Naive thymus-derived CD4-positive, alpha-beta T cell (primary cell): ENCODE measurements at regions of chr5 and their contacts with region 1.

Region 1: DNA sequence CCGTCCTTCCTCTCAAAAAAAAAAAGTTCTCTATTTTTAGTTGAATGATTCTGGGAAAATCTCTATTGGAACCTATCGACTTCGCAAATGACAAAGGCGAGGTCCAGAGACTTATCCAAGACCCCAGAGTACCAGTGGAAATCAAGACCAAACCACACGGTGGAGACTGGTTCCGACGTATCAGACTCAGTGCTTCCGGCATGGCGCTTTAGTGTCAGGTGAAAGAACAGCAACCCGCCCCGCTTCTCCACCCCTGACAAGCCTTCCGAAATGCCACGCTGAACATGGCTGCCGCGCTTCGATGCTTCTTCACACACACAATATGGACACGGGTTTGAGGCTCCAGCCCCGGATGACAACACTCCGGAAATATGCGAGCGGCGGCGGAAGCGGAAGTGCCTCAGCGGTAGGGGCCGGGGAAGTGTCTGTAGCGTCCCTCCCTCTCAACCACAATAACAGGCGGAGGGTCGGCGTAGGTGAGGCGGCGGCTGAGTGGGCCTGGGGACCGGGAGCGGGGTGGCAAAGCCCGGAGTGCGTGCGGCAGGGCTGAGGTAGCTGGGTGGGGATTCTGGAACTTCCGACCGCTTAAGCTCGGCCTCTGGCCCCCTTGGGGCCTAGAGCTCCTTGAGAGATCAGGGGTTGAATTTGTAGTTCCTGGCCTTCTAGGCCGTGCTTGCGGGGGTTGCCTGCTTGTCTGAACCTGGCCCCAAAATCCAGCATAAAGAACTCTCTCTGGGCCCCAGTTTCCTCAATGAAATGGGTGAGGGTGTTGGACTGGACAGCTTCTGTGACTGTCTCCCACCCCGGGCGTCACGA is at the start of gene FBXO38:
- DNase-seq: peak; percentile 88 to 99 (median 98)
- ATAC-seq: peak; percentile 97
- H3K4me3 ChIP-seq: peak within 1 kb of the TSS; percentile 66
- H3K4me3 Mint-ChIP-seq: peak within 1 kb of the TSS; percentile 84 to 97 (median 88)
- H3K27ac ChIP-seq: peak within 1 kb of the TSS; percentile 91
- H3K27ac Mint-ChIP-seq: peak within 1 kb of the TSS; percentile 93 to 99 (median 98)
- H3K4me1 ChIP-seq: peaks cover 18 to 41% of the 10 kb centered on the region in 2 donors
- H3K4me1 Mint-ChIP-seq: peaks cover 43 to 78% (median 71%) of the 10 kb centered on the region in 7 donors
- H3K27me3 ChIP-seq: no peaks in the 10 kb centered on the region
- H3K27me3 Mint-ChIP-seq: no peaks in the 10 kb centered on the region
- total RNA-seq, gene FBXO38: 59.2 to 80.0 (median 65.6) TPM

Region 2: DNA sequence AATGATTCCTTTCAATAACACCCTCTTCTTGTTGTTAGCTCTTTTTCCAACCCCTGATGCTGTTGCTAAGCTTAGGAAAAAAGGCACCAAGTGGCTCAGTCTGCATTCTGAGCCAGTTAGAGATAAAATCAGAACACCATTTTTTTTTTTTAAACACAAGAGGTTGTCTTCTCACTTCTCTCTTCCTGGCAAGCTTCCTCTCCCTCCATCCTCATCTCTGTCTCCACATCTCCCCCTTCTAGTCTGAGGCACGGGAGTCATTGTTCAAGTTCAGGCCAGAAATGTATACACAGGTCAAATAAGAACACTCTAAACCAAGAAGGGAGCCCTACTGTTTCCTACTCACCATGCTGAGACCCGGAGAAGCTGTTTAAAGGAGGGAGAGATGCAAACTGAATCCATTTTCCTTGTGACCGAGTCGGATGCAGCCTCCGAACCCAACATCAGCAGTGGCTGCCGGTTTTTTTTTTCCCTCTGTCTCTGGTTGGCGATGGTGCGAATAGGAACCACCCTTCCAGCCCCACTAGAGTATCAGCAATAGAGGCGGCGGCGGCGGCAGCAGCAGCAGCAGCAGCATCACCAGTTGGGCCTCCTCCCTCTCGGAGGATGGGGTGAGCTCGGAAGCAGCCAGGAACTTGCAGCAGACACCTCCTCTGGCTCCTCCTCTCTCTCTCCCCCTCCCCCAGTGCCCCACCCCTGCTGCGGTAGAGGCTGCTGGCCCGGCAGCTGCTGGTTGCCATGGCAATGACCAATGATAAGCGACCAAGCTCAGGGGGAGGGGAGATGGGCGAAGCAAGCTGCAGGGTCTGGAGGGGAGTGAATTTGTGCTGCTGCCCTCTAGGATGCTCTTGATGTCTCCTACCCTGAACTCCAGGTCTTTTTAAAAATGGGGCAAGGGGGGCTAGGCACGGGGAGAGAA is 601.4 kb before region 1 on chr5 and contains the start of gene JAKMIP2:
- CTCF ChIA-PET with region 1: no interaction called
- POLR2A ChIA-PET with region 1: no interaction called
- intact Hi-C with region 1: loop called in 1 of 2 experiments (anchors 1 kb)
- DNase-seq: peak; percentile 10 to 91 (median 72)
- ATAC-seq: peak; percentile 95
- H3K4me3 ChIP-seq: peak within 1 kb of the TSS; percentile 57
- H3K4me3 Mint-ChIP-seq: peak within 1 kb of the TSS; percentile 27 to 93 (median 83)
- H3K27ac ChIP-seq: peak within 1 kb of the TSS; percentile 19
- H3K27ac Mint-ChIP-seq: peak within 1 kb of the TSS in 8 of 9 donors; percentile 3 to 94 (median 87)
- H3K4me1 ChIP-seq: peaks cover 0 to 15% of the 10 kb centered on the region in 2 donors
- H3K4me1 Mint-ChIP-seq: peaks cover 6 to 27% (median 16%) of the 10 kb centered on the region in 7 donors
- H3K27me3 ChIP-seq: no peaks in the 10 kb centered on the region
- H3K27me3 Mint-ChIP-seq: peaks cover 0 to 22% (median 4%) of the 10 kb centered on the region in 5 donors
- total RNA-seq, gene JAKMIP2: 0.16 to 4.5 (median 0.88) TPM

Region 3: DNA sequence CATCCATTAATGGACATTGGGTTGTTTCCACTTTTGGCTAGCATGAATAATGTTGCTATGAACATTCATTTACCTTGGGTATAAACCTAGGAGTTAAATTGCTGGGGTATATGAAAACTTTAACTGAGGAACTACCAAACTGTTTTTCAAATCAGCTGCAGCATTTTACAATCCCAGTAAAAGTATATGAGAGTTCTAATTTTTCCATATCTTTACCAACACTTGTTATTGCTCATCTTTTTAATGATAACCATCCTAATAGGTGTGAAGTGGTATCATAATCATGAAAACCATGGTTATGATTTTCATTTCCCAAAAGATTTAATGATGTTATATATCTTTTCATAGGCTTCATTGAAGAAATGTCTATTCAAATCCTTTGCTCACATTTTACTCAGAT is 15.5 kb before region 1 on chr5:
- CTCF ChIA-PET with region 1: no interaction called
- POLR2A ChIA-PET with region 1: no interaction called
- intact Hi-C with region 1: no loop called
- DNase-seq: no peak
- ATAC-seq: no peak
- H3K4me3 ChIP-seq: no peak overlapping the region
- H3K4me3 Mint-ChIP-seq: no peak overlapping the region
- H3K27ac ChIP-seq: no peak overlapping the region
- H3K27ac Mint-ChIP-seq: no peak overlapping the region
- H3K4me1 ChIP-seq: no peaks in the 10 kb centered on the region
- H3K4me1 Mint-ChIP-seq: no peaks in the 10 kb centered on the region
- H3K27me3 ChIP-seq: no peaks in the 10 kb centered on the region
- H3K27me3 Mint-ChIP-seq: peaks cover 0 to 8% (median 0%) of the 10 kb centered on the region in 5 donors

Region 4: GRCh38 chr5:148620696-148621095 is 236.9 kb after region 1 on chr5:
- CTCF ChIA-PET with region 1: no interaction called
- POLR2A ChIA-PET with region 1: no interaction called
- intact Hi-C with region 1: loop called in 1 of 2 experiments (anchors 10 kb)
- DNase-seq: peak in 8 of 9 donors; percentile 3 to 39 (median 15)
- ATAC-seq: peak; percentile 93
- H3K4me3 ChIP-seq: no peak overlapping the region
- H3K4me3 Mint-ChIP-seq: peak overlapping the region in 7 of 10 donors; percentile 3 to 56 (median 34)
- H3K27ac ChIP-seq: no peak overlapping the region
- H3K27ac Mint-ChIP-seq: peak overlapping the region in 4 of 9 donors; percentile 17 to 33 (median 20)
- H3K4me1 ChIP-seq: peaks cover 5 to 18% of the 10 kb centered on the region in 2 donors
- H3K4me1 Mint-ChIP-seq: peaks cover 16 to 33% (median 25%) of the 10 kb centered on the region in 7 donors
- H3K27me3 ChIP-seq: no peaks in the 10 kb centered on the region
- H3K27me3 Mint-ChIP-seq: peaks cover 8 to 43% (median 12%) of the 10 kb centered on the region in 5 donors

Region 5: GRCh38 chr5:148826053-148826738 is 442.4 kb after region 1 on chr5 and contains the start of gene ADRB2:
- CTCF ChIA-PET with region 1: no interaction called
- POLR2A ChIA-PET with region 1: no interaction called
- intact Hi-C with region 1: loop called (anchors 1 kb)
- DNase-seq: peak; percentile 74 to 83 (median 79)
- ATAC-seq: peak; percentile 94
- H3K4me3 ChIP-seq: peak within 1 kb of the TSS; percentile 75
- H3K4me3 Mint-ChIP-seq: peak within 1 kb of the TSS; percentile 83 to 94 (median 89)
- H3K27ac ChIP-seq: peak within 1 kb of the TSS; percentile 54
- H3K27ac Mint-ChIP-seq: peak within 1 kb of the TSS; percentile 16 to 82 (median 70)
- H3K4me1 ChIP-seq: peaks cover 7 to 18% of the 10 kb centered on the region in 2 donors
- H3K4me1 Mint-ChIP-seq: peaks cover 20 to 43% (median 31%) of the 10 kb centered on the region in 7 donors
- H3K27me3 ChIP-seq: no peaks in the 10 kb centered on the region
- H3K27me3 Mint-ChIP-seq: peaks cover 0 to 76% (median 5%) of the 10 kb centered on the region in 5 donors
- total RNA-seq, gene ADRB2: 0.36 to 14.4 (median 1.3) TPM

Region 6: DNA sequence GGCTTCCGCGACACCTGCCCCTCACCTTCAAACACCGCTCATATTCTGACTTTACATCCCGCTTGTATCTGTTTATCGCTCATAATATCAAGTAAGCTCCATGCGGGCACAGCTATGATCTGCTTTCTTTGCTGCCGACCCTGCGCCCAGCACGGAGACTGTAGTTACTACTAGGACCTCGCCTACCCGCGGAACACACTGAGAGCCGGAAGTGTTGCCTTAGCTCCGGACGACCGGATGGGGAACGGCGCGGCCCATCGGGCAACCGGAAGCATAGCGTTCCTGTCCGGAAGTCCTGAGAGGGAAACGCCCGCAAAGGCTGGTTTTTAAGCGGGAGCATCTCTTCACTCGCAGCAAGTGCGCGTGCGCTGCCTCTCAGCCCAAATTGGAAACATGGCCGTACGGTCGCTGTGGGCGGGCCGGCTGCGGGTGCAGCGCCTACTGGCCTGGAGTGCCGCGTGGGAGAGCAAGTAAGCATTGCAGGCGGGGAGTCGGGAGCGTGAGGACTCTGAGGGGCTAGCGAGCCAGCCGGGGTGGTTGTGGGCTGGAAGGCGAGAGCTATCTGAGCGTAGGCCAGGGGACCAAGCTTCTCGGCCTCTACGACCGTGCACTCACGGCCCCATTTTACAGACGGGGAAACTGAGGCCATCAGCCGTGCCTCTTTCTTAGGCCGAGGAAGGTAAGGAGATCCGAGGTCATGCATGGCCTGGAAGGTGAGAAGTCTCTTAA is 961.5 kb after region 1 on chr5 and contains the start of gene GRPEL2:
- CTCF ChIA-PET with region 1: no interaction called
- POLR2A ChIA-PET with region 1: no interaction called
- intact Hi-C with region 1: loop called in 1 of 2 experiments (anchors 2 kb)
- DNase-seq: peak; percentile 62 to 90 (median 80)
- ATAC-seq: peak; percentile 78
- H3K4me3 ChIP-seq: peak within 1 kb of the TSS; percentile 90
- H3K4me3 Mint-ChIP-seq: peak within 1 kb of the TSS; percentile 80 to 97 (median 93)
- H3K27ac ChIP-seq: peak within 1 kb of the TSS; percentile 75
- H3K27ac Mint-ChIP-seq: peak within 1 kb of the TSS; percentile 89 to 95 (median 92)
- H3K4me1 ChIP-seq: peaks cover 37 to 43% of the 10 kb centered on the region in 2 donors
- H3K4me1 Mint-ChIP-seq: peaks cover 47 to 69% (median 59%) of the 10 kb centered on the region in 7 donors
- H3K27me3 ChIP-seq: no peaks in the 10 kb centered on the region
- H3K27me3 Mint-ChIP-seq: peaks cover 0 to 1% (median 0%) of the 10 kb centered on the region in 5 donors
- total RNA-seq, gene GRPEL2: 12.0 to 40.1 (median 32.2) TPM

Region 7: GRCh38 chr5:149731639-149732323 is 1348.0 kb after region 1 on chr5:
- CTCF ChIA-PET with region 1: no interaction called
- POLR2A ChIA-PET with region 1: no interaction called
- intact Hi-C with region 1: loop called (anchors 5 to 10 kb)
- DNase-seq: peak; percentile 52 to 84 (median 67)
- ATAC-seq: peak; percentile 64
- H3K4me3 ChIP-seq: peak overlapping the region; percentile 84
- H3K4me3 Mint-ChIP-seq: peak overlapping the region; percentile 77 to 92 (median 87)
- H3K27ac ChIP-seq: peak overlapping the region; percentile 67
- H3K27ac Mint-ChIP-seq: peak overlapping the region in 8 of 9 donors; percentile 38 to 93 (median 78)
- H3K4me1 ChIP-seq: no peaks in the 10 kb centered on the region
- H3K4me1 Mint-ChIP-seq: peaks cover 0 to 17% (median 8%) of the 10 kb centered on the region in 7 donors
- H3K27me3 ChIP-seq: no peaks in the 10 kb centered on the region
- H3K27me3 Mint-ChIP-seq: peaks cover 0 to 18% (median 0%) of the 10 kb centered on the region in 5 donors

Region 8: DNA sequence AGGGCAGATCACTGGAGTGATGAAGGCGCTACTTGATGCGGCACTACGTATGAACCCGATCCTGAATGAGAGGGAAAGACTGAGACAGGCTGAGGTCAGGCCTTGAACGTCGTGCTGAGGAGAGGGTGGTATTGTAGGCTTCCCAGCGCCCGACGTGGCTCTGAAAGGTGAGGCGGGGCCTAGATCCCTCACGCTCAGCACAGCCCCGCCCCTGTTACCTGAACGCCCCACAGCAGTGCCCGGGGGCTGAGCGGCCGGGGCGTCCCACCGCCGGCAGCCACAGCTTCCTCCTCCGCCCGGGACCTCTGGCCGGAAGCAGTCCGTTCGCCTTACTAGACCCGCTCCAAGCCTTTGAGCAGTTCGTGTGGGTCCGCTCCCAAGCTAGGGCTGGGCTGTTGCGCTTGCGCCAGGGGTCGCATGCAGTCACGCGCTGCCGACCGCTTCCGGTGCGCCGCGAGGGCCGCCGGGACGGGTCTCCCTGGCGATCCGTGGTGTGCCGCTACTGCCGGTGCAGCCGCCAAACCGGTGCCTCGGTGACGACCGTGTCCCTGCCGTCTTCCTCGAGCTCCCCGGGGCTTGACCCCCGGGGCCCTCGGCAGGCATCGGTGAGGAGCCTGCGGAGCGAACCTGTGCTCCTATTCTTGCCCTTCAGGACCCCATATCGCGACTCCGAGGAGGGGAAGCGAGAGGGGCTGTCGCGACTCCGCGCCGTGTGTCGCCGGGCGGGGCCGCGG is 1616.7 kb after region 1 on chr5 and contains the starts of genes HMGXB3 and TIGD6:
- CTCF ChIA-PET with region 1: no interaction called
- POLR2A ChIA-PET with region 1: no interaction called
- intact Hi-C with region 1: loop called in 1 of 2 experiments (anchors 10 kb)
- DNase-seq: peak; percentile 64 to 87 (median 74)
- ATAC-seq: peak; percentile 83
- H3K4me3 ChIP-seq: peak within 1 kb of the TSS; percentile 76
- H3K4me3 Mint-ChIP-seq: peak within 1 kb of the TSS; percentile 86 to 99 (median 93)
- H3K27ac ChIP-seq: peak within 1 kb of the TSS; percentile 80
- H3K27ac Mint-ChIP-seq: peak within 1 kb of the TSS; percentile 75 to 98 (median 94)
- H3K4me1 ChIP-seq: peaks cover 18 to 23% of the 10 kb centered on the region in 2 donors
- H3K4me1 Mint-ChIP-seq: peaks cover 33 to 55% (median 46%) of the 10 kb centered on the region in 7 donors
- H3K27me3 ChIP-seq: no peaks in the 10 kb centered on the region
- H3K27me3 Mint-ChIP-seq: no peaks in the 10 kb centered on the region
- total RNA-seq, gene HMGXB3: 27.2 to 40.6 (median 34.5) TPM
- total RNA-seq, gene TIGD6: 2.3 to 7.4 (median 2.8) TPM